Psoas muscle (tissue), 8 donors: ENCODE measurements at regions of chr16 and their contacts with region 1.

Region 1: DNA sequence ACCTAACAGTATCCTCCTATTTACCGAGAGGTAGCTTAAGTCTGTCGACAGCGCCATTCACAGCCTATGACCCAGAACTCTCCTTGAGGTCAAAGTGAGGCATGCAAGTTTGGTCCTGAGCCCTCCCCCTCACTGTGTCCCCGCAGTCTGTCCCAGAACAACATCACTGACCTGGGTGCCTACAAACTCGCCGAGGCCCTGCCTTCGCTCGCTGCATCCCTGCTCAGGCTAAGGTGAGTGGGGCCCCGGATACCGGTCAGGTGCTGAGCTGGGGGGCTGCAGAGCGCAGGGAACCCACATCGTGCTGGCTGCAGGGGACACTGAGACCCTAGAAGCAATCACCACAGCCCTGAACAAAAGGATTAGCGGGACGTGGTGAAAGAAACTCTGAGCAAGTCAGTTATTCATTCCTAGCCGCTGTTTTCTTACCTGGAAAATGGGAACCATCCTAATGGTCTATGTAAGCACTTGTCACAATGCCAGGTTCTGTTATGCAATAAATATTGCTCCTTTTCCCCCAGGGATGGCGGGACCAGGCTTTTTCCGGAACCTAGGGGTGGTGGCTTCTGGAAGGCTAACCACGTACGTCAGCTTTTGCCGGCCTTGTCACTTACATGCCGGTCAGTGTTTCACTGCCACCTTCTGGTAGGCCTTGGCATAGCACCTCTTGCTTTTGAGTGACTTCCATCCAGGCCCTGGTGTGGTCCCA is 23.8 kb downstream of the DEXI start:
- DNase-seq: peak; percentile 90 to 94
- ATAC-seq: peak; percentile 54 to 66 (median 60)
- H3K4me3 ChIP-seq: peak overlapping the region; percentile 9
- H3K27ac ChIP-seq: peak overlapping the region; percentile 91
- H3K4me1 ChIP-seq: peaks cover 35% of the 10 kb centered on the region
- H3K27me3 ChIP-seq: no peaks in the 10 kb centered on the region
- CTCF ChIP-seq: peak; percentile 98

Region 2: GRCh38 chr16:10509534-10510025 is 408.9 kb before region 1 on chr16:
- intact Hi-C with region 1: loop called (anchors 5 kb)
- DNase-seq: no peak
- ATAC-seq: peak; percentile 87 to 96 (median 90)
- H3K4me3 ChIP-seq: no peak overlapping the region
- H3K27ac ChIP-seq: no peak overlapping the region
- H3K4me1 ChIP-seq: peaks cover 10% of the 10 kb centered on the region
- H3K27me3 ChIP-seq: no peaks in the 10 kb centered on the region
- CTCF ChIP-seq: peak; percentile 79

Region 3: GRCh38 chr16:10579965-10580882 is 338.2 kb before region 1 on chr16 and contains the start of gene EMP2:
- intact Hi-C with region 1: loop called in 1 of 2 experiments (anchors 5 kb)
- DNase-seq: peak; percentile 82 to 86
- ATAC-seq: peak; percentile 62 to 83 (median 70)
- H3K4me3 ChIP-seq: peak within 1 kb of the TSS; percentile 86
- H3K27ac ChIP-seq: peak within 1 kb of the TSS; percentile 86
- H3K4me1 ChIP-seq: peaks cover 43% of the 10 kb centered on the region
- H3K27me3 ChIP-seq: no peaks in the 10 kb centered on the region
- CTCF ChIP-seq: peak; percentile 46
- total RNA-seq, gene EMP2: 11.0 to 25.4 (median 17.7) TPM

Region 4: DNA sequence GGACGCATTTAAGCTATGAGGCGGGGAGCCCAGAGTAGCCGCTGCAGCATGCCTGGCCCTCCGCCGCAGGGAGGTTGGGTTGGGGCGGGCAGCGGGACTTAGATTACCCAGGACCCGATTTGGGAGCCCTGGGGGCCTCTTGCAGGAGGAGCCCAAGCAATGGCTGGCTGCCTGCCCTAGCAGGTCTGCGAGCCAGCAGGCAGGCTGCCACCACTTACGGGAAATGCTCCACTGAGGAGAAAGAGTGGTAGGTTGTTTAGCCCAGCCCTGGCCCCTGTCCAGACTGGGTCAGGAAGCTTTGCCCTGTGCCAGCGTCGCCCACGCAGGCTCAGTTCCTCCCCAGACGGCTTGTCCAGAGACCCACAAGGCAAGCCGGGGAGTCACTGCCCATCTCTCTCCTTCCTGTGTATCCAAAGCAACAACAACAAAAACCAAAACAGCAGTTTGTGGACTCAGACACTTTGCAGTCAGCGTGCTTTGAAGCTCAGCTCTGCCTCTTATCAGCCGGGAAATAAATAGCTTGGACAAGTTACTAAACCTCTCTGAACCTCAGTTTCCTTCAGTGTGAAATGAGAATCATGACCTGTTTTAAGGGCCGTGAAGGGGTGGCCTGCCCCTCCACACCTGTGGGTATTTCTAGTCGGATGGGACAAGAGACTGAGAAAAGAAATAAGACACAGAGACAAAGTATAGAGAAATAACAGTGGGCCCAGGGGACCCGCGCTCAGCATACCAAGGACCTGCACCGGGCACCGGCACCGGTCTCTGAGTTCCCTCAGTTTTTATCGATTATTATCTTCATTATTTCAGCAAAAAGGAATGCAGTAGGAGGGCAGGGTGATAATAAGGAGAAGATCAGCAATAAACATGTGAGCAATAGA is 89.4 kb before region 1 on chr16:
- intact Hi-C with region 1: loop called (anchors 2 to 10 kb)
- DNase-seq: peak; percentile 91 to 93
- ATAC-seq: peak; percentile 78 to 82 (median 79)
- H3K4me3 ChIP-seq: peak overlapping the region; percentile 32
- H3K27ac ChIP-seq: peak overlapping the region; percentile 88
- H3K4me1 ChIP-seq: peaks cover 20% of the 10 kb centered on the region
- H3K27me3 ChIP-seq: no peaks in the 10 kb centered on the region
- CTCF ChIP-seq: no peak

Region 5: DNA sequence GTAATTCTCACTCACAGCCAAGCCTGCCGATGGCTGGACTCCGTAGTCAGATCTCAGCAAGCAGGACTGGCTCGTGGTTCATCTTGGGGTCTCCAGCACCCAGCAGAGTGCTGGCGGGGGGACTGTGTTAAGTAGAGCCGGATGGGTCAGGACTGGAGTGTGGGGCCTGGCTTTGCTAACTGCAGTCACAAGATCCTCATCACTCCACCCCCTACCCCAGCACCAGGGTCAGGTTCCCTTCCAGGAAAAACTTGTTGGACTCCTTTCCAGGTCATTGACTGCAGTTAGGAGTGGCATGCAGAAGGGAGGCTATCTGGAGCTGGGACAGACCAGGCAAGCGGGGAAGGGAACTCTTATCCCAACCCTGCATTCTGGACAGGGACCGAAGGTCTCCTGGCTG is 35.4 kb before region 1 on chr16:
- intact Hi-C with region 1: loop called in 1 of 2 experiments (anchors 2 kb)
- DNase-seq: no peak
- ATAC-seq: peak; percentile 47 to 85 (median 66)
- H3K4me3 ChIP-seq: peak overlapping the region; percentile 45
- H3K27ac ChIP-seq: peak overlapping the region; percentile 46
- H3K4me1 ChIP-seq: peaks cover 23% of the 10 kb centered on the region
- H3K27me3 ChIP-seq: peaks cover 0 to 7% (median 0%) of the 10 kb centered on the region in 3 donors
- CTCF ChIP-seq: no peak